GM23248 (cell line): ENCODE measurements at regions of chr14 and their contacts with region 1.

Region 1: DNA sequence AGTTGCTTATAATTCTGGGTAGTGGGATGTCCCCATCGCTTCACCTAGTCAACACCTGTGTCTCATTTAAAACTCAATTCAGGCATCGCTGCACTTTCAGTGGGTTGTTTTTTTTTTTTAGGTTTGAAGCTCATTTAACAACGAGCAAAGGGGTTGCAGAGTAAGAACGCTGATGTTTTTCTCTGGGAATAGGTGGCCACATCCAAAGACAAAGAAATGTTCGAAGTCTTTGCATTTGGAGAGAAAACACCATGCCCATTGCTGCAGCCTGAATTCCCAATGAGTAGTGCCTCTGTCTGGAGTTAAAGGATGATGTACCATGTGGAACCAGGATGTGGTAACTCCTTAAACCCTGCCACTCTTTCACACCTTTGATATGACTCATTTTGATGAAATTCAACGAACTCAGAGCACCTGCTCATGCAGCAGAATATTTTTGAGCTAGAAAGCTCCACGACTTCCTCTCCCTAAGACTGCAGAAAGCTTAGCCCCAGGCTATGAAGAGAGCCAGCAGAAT is 35.1 kb upstream of the BATF start:
- DNase-seq: no peak
- H3K4me3 ChIP-seq: no peak overlapping the region
- H3K27ac ChIP-seq: no peak overlapping the region
- H3K4me1 ChIP-seq: no peaks in the 10 kb centered on the region
- H3K27me3 ChIP-seq: no peaks in the 10 kb centered on the region

Region 2: GRCh38 chr14:75050852-75051554 is 436.2 kb before region 1 on chr14 and contains the start of gene MLH3:
- in situ Hi-C with region 1: no loop called
- DNase-seq: peak; percentile 88
- H3K4me3 ChIP-seq: peak within 1 kb of the TSS; percentile 73
- H3K27ac ChIP-seq: peak within 1 kb of the TSS; percentile 87
- H3K4me1 ChIP-seq: peaks cover 76% of the 10 kb centered on the region
- H3K27me3 ChIP-seq: no peaks in the 10 kb centered on the region
- total RNA-seq, gene MLH3: 12.3 and 19.9 TPM in 2 replicates

Region 3: GRCh38 chr14:75307700-75308379 is 179.4 kb before region 1 on chr14:
- in situ Hi-C with region 1: loop called (anchors 10 kb)
- DNase-seq: peak; percentile 90
- H3K4me3 ChIP-seq: no peak overlapping the region
- H3K27ac ChIP-seq: no peak overlapping the region
- H3K4me1 ChIP-seq: peaks cover 12% of the 10 kb centered on the region
- H3K27me3 ChIP-seq: no peaks in the 10 kb centered on the region